Cardiac septum (tissue), 1 donor: ENCODE measurements at regions of chr19 and their contacts with region 1.

Region 1: DNA sequence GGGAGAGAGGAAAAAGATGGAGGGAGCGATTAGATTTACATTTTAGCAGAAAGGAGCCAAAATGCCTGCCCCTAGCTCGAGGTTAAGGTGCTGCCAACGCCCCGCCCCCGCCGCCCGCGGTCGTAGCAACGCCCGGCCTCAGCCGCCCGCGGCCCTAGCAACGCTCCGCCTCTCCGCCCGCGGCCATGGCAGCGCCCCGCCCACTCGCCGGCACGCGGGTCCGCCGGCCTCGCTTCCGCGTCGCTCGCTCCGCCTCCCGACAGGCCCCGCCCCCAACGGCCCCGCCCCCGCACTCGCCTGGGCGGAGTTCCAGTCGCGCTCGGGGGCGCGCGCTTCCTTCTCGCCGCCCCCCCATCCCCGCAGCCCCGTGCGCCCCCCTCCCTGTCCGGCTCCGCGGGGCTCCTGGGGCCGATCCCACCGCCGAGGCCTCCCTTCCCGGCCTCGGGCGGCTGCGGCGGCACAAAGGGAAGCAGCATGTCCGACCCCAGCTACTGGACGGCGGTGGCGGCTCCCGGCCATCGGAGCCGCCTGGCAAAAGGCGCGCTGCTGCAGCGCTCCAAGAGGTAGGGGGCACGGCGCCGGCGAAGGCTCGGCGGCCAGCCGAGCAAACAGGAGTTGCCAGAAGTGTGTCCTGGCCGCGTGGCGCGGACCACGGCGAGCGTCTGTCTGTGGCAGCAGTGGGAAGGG is 20.3 kb downstream of the MAST3 start:
- DNase-seq: peak; percentile 96

Region 2: DNA sequence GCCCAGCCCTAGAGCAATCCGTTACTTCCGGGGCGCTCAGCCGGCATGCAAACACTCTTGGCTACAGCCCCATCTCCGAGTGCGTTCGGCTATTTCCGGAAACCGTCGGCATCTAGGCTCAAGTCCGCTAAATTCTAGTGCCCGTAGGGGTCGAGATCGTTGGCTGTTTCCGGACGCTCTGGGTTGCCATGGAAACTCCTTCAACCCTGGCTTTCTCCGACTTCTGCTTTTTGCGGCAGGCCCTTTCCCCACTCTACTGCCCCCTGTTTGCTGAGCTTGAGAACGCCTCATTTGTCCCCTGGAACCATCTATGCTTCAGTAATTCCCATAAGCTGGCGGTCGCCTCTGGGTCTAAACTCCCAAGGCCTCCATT is 34.6 kb after region 1 on chr19:
- intact Hi-C with region 1: loop called (anchors 5 kb)
- DNase-seq: peak; percentile 97

Region 3: DNA sequence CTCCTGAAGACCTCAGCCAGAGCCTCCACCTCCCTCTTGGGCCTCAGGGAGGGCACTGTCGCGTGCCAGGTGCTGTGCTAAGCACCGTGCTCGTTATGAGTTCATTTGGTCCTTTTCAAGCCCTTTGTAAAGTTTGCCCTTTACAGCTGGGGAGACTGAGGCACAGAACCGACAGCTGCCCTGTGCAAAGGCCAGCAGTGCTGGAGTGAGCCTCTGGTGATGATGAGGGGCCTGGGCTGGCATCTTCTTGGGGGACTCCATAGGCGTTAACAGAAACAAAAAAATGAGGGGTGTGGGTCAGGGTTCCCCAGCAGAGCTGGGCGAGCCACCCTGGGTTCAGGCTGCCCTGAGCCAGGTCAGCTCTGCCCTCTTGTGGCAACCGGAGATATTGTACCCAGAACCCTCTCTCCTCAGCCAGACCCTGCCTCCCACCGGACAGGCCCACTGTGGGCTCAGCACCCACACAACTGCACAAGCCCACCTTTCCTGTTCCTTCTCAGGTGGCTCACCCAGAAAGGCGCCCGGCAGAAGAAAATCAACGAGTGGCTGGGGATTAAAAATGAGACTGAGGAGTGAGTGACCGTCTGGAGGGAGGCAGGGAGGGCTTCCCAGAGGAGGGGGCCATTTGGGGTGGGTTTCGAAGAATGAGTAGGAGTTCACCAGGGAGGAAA is 50.3 kb after region 1 on chr19:
- intact Hi-C with region 1: loop called (anchors 2 kb)
- DNase-seq: no peak

Region 4: GRCh38 chr19:18251587-18252369 is 133.9 kb after region 1 on chr19:
- intact Hi-C with region 1: loop called (anchors 2 kb)
- DNase-seq: no peak

Region 5: GRCh38 chr19:18322759-18323460 is 205.1 kb after region 1 on chr19 and contains the start of gene LSM4:
- intact Hi-C with region 1: loop called (anchors 10 kb)
- DNase-seq: peak; percentile 99
- total RNA-seq, gene LSM4: 83.8 TPM